BJ (cell line): ENCODE measurements at regions of chr3 and their contacts with region 1.

Region 1: GRCh38 chr3:134212906-134213665 is 37.6 kb downstream of the RYK start:
- DNase-seq: no peak
- H3K4me3 ChIP-seq: no peak overlapping the region
- H3K27me3 ChIP-seq: no peaks in the 10 kb centered on the region
- CTCF ChIP-seq: peak; percentile 97

Region 2: GRCh38 chr3:133927540-133928066 is 285.5 kb before region 1 on chr3:
- CTCF ChIA-PET with region 1: interaction called, 141 read pairs
- POLR2A ChIA-PET with region 1: no interaction called
- DNase-seq: no peak
- H3K4me3 ChIP-seq: peak overlapping the region; percentile 34
- H3K27me3 ChIP-seq: peaks cover 2% of the 10 kb centered on the region; the same call in 1 of the 2 replicates
- CTCF ChIP-seq: peak; percentile 58

Region 3: GRCh38 chr3:134197681-134198261 is 15.3 kb before region 1 on chr3:
- CTCF ChIA-PET with region 1: interaction called, 88 read pairs
- POLR2A ChIA-PET with region 1: no interaction called
- DNase-seq: peak; percentile 32
- H3K4me3 ChIP-seq: no peak overlapping the region
- H3K27me3 ChIP-seq: no peaks in the 10 kb centered on the region
- CTCF ChIP-seq: peak; percentile 78

Region 4: DNA sequence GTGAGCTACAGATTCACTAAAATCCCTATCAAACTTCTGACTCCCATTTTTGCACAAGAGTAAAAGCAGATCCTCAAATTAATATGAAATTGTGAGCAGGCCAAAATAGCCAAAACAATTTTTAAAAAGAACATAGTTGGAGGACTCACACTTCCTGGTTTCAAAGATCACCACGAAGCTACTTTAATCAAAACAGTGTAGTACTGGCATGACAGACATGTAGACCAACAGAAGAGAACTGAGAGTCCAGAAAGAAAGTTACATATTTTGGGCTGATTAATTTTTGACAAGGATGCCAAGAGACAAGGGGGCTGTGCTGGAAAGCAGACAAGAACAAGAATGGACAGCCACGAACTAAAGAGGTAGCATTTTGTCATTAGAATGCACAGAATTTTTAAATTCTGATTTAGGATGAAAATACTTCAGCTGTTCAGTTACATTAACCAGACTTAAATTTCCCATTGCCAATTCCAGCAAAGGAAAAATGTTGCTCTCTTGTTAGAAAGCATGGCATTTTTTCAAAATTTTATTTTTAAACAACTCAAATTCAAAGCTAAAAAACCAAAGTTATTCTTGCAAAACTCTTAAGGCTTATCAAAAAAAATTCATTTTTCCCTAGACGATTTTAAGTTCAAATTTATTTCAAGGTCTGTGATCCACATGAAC is 23.6 kb after region 1 on chr3:
- CTCF ChIA-PET with region 1: interaction called, 29 read pairs
- POLR2A ChIA-PET with region 1: no interaction called
- DNase-seq: no peak
- H3K4me3 ChIP-seq: no peak overlapping the region
- H3K27me3 ChIP-seq: no peaks in the 10 kb centered on the region
- CTCF ChIP-seq: no peak

Region 5: DNA sequence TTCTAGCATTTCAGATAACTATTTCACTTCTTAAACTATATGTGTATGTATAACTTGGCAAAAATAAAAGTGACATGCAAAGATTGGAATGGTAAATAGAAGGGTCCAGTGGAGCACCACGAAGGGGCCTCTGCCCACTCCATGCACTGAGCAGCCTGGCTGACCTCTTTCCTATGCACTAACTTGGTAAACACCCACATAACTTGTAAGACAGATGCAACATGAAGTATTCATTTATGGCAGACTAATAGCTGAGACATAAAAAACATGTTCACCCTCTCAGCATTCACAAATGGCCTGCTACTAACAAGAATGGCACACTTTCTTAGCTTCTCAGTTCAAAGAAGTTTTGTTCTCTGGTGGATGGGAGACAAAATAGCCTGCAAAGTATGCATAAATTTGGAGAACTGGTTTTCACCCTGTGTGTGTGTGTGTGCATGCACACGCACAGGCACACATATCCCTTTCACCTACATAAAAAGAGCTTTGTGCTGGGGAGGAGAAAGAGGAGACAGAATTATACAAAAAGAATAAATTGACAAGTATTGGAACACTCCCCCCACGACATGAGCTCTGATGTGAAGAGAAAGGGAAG is 64.1 kb after region 1 on chr3:
- CTCF ChIA-PET with region 1: interaction called, 14 read pairs
- POLR2A ChIA-PET with region 1: no interaction called
- DNase-seq: no peak
- H3K4me3 ChIP-seq: no peak overlapping the region
- H3K27me3 ChIP-seq: peaks cover 2% of the 10 kb centered on the region; the same call in 1 of the 2 replicates
- CTCF ChIP-seq: no peak

Region 6: GRCh38 chr3:134308350-134308891 is 95.3 kb after region 1 on chr3:
- CTCF ChIA-PET with region 1: interaction called, 106 read pairs
- POLR2A ChIA-PET with region 1: no interaction called
- DNase-seq: no peak
- H3K4me3 ChIP-seq: no peak overlapping the region
- H3K27me3 ChIP-seq: no peaks in the 10 kb centered on the region
- CTCF ChIP-seq: peak; percentile 99

Region 7: DNA sequence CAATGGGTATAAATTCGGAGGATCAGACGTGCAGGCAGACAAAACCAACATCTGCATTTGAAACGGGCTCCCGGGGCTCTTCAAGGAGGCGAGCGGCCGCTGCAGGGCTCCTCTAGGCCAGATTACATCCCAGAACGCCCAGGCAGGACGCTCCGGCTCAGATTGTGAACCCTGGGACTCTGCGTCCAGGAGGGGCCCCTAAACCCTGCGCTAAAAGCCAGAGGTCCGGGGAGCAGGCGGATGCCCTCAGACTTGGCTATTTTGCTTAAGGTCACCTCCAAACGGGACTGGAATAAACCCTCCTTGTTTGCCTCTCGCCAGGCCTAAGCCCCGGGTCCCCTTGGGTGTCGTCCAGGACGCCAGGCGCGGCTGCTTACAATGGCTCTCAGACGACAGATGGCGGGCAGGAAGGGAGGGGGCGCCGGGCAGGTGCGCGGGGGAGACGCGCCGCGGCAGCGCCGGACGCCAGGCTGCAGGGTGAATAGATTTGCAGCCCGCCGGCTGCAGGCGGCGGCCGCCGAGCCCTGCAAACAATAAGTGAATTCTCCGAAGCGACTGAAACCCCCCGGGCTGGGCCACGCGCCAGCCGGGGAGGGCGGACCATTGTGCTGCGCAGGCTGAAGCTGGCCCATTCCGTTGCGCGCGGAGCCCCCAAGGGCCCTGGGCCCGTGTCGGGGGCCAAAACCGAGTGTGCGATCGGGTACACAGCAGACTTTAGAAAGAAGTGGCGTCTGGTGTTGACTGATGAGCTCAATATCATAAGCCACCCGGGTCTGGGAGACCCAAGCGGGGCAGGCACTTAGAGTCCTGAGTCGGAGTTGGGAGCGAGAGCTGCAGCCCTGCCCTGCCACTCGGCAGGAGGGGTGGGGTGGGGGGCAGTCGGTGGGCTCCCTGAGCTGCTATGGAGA is 193.5 kb after region 1 on chr3:
- CTCF ChIA-PET with region 1: no interaction called
- POLR2A ChIA-PET with region 1: no interaction called
- DNase-seq: no peak
- H3K4me3 ChIP-seq: peak overlapping the region; percentile 15
- H3K27me3 ChIP-seq: 0 out of 2 replicates have a peak, but pooled peaks cover 2% of the 10 kb centered on the region
- CTCF ChIP-seq: no peak

Region 8: DNA sequence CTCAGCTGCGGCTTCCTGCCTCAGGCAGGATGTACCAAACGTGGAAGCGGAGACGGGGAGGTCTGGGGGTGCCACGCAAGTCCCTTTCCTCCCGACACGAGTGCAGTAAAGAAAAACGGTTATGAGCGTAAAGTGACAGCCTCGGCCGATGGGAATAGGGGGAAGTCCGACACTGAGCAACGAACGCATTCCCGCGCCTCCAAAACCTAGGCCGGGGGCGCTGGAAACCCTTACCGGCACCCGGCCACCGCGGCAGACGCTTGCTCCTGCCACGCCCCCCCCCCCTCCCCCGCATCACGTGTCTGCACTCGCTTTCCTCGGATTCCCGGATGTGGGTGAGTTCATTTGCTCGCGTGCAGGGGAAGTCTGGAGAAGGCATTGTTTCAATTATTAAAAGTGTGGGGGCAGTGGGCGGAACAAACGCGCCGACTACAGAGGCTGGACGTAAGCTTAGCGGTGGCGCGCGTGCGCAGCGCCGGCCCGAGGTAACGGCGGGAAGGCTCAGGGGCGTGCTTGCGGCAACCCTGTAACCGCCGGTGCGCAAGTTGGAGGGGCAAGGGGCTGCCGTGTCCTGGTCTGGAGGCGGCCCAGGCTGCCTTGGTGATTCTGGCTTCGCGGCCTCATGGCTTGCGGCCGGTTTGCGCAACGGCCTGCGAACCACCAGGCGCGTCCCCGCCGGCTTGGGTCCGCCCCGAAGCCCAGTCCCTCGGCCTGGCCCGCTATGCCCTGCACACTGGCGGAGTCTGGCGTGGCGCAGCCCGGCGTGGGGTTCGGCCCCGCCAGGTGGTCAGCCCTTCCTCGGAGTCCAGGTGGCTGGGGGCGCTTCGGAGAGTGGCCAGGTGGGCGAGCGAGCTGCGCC is 272.9 kb after region 1 on chr3 and contains the starts of genes ANAPC13 and CEP63:
- CTCF ChIA-PET with region 1: interaction called, 21 read pairs
- POLR2A ChIA-PET with region 1: no interaction called
- DNase-seq: peak; percentile 98
- H3K4me3 ChIP-seq: peak within 1 kb of the TSS; percentile 85
- H3K27me3 ChIP-seq: no peaks in the 10 kb centered on the region
- CTCF ChIP-seq: no peak
- polyA plus RNA-seq, gene ANAPC13: 54.6 and 115 TPM in 2 replicates
- polyA plus RNA-seq, gene CEP63: 6.4 and 14.5 TPM in 2 replicates